AG04449 (cell line): ENCODE measurements at regions of chr18 and their contacts with region 1.

Region 1: DNA sequence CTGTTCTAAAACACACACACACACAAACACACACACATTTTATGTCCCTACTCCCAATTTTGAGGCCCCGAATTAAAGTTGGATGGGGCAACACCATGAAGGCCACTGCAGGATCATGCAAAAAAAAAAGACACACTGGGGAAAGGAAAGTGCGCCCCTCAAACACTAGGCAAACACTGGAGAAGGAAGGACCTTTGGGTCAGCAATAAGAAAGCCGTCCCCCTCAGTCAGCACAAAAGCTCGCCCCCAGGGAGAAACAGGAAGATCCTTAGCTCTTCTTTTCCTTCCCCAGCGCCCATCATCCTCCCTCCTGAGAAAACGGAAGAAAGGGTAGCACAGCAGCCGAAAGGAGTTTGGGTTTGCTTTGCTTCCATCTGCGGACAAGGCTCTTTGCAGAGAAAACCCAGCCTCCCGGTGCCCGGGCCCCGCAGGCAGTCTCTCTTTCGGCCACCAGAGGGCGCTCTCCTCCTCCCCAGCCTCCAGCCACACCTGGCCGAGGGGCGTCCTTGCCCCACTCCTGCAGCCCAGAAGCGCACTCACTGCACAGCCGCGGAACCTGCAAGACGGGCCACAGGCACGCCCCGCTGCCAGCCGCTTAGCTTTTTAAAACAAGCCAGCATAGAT is 248.5 kb downstream of the CDH20 start:
- DNase-seq: no peak
- H3K4me3 ChIP-seq: peak overlapping the region; percentile 53
- CTCF ChIP-seq: peak; percentile 97

Region 2: GRCh38 chr18:61541673-61542072 is 40.0 kb before region 1 on chr18:
- CTCF ChIA-PET with region 1: interaction called, 15 read pairs
- POLR2A ChIA-PET with region 1: no interaction called
- DNase-seq: no peak
- H3K4me3 ChIP-seq: no peak overlapping the region
- CTCF ChIP-seq: no peak

Region 3: GRCh38 chr18:61569176-61569892 is 12.4 kb before region 1 on chr18:
- CTCF ChIA-PET with region 1: interaction called, 98 read pairs
- POLR2A ChIA-PET with region 1: no interaction called
- DNase-seq: peak; percentile 63
- H3K4me3 ChIP-seq: no peak overlapping the region
- CTCF ChIP-seq: no peak

Region 4: GRCh38 chr18:61606759-61607158 is 25.1 kb after region 1 on chr18:
- CTCF ChIA-PET with region 1: interaction called, 94 read pairs
- POLR2A ChIA-PET with region 1: no interaction called
- DNase-seq: peak; percentile 71
- H3K4me3 ChIP-seq: peak overlapping the region; percentile 57
- CTCF ChIP-seq: no peak

Region 5: DNA sequence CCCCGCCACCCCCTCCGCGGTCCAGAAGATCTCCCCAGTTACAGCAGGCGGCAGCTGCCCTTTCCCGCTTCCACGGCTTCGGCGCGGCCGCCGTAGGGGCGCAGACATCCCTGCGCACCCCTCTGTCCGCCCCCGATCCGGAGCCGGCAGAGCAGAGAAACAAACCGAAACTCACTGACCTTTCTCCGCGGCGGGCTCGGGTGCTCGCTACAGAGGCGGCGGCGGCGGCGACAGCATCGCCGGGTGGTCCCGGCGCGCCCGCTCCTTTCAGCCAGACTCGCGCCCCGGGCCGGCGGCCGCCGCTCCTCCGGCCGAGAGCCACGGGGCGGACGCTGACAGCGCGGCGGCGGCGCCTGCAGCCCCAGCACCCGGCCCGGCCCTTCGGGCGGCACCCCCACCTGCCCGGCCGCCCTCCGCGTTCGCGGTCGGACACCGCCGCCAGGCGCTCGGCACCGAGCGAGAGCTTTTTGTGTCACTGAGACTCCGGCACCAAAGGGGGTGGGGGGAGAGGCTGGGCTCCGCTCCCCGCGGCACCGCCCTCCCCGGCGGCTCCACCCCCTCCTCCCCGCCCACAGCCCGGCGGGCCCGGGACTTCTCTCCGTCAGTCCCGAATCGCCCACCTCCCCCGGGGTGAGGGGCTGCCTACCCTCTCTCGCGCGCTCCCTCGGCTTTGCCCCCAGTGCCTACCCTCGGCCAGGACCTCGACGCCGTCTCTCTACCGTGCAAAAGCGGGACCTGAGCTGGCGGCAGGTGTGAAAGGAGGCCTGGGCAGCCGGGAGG is 312.5 kb after region 1 on chr18:
- CTCF ChIA-PET with region 1: interaction called, 18 read pairs
- POLR2A ChIA-PET with region 1: no interaction called
- DNase-seq: no peak
- H3K4me3 ChIP-seq: peak overlapping the region; percentile 80
- CTCF ChIP-seq: peak; percentile 38